Right ventricle myocardium inferior (tissue), 1 donor: ENCODE measurements at regions of chr14 and their contacts with region 1.

Region 1: DNA sequence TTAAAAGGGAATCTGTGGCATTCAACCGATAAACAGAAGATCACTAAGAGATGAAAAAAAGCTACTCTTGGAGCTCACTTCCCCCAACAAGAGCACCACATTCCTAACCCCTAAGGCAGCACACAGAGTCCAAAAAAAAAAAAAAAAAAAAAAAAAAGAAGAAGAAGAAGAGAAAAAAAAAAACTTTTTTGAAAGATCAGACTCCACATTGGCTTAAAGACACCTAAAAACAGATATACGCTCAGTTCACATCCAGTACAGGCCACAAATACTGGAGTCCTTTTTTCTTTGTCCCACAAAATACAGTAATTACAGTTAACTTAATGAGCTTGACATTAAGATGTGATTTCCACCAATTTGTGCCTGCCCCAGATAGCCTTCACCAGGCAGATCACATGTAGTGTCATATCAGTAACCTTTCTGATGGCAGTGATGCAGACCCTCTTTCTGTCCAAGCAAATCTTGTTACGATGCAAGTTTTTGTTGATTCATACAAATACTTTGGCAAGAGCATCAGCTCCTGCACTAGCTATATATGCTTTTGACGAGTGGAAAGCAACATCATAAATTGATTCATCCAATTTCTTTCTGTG is 20.7 kb downstream of the COCH start:
- DNase-seq: no peak
- ATAC-seq: no peak

Region 2: DNA sequence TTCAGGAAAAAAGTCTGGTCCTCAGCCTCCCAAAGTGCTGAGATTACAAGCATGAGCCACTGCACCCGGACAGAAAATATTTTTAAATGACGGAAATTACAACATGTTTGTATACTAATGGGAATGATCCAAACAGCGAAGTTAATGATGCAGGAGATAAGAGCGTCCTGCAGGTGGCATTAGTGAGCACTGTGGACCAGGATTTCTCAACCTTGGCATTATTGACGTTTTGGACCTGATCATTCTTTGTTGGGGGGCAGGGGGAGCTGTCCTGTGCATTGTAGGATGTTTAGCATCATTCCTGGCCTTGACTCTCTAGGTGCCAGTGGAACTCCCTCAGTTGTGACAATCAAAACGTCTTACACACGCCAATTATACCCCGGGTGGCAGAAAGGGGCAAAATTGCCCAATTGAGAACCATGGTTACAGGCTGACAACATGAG is 238.8 kb before region 1 on chr14:
- intact Hi-C with region 1: loop called (anchors 5 kb)
- DNase-seq: no peak
- ATAC-seq: peak; percentile 46